ENCODE measurements at regions of chr4 and their contacts with region 1.

Region 1: GRCh38 chr4:177190995-177191568 is 118.6 kb upstream of the NEIL3 start:
- DNase-seq: no peak
- ATAC-seq: no peak
- H3K4me3 ChIP-seq: no peak overlapping the region
- H3K27ac ChIP-seq: no peak overlapping the region
- H3K4me1 ChIP-seq: no peaks in the 10 kb centered on the region
- H3K27me3 ChIP-seq: no peaks in the 10 kb centered on the region
- CTCF ChIP-seq: no peak

Region 2: GRCh38 chr4:176708771-176709311 is 482.2 kb before region 1 on chr4:
- CTCF ChIA-PET with region 1: no interaction called
- POLR2A ChIA-PET with region 1: interaction called, 13 read pairs
- in situ Hi-C with region 1: no loop called
- intact Hi-C with region 1: no loop called
- DNase-seq: no peak
- ATAC-seq: no peak
- H3K4me3 ChIP-seq: no peak overlapping the region
- H3K27ac ChIP-seq: no peak overlapping the region
- H3K4me1 ChIP-seq: no peaks in the 10 kb centered on the region
- H3K27me3 ChIP-seq: no peaks in the 10 kb centered on the region
- CTCF ChIP-seq: no peak

Region 3: DNA sequence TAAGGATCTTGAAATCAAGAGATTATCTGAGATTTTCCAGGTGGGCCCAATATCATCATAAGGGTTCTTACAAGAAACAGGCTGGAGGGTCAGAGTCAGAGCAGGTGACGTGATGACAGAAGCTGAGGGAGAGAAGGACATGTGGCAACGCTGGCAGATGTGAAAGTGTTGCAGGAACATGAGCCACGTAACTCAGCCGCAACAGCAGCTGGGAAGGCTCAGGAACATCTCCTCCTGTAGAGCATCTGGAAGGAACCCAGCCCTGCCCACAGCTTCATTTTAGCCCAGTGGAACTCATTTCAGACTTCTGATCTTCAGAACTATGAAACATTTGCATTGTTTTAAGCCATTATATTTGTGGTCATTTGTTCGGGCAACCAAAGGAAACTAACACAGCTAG is 242.1 kb before region 1 on chr4:
- CTCF ChIA-PET with region 1: no interaction called
- POLR2A ChIA-PET with region 1: no interaction called
- in situ Hi-C with region 1: no loop called
- intact Hi-C with region 1: no loop called
- DNase-seq: no peak
- ATAC-seq: no peak
- H3K4me3 ChIP-seq: no peak overlapping the region
- H3K27ac ChIP-seq: no peak overlapping the region
- H3K4me1 ChIP-seq: no peaks in the 10 kb centered on the region
- H3K27me3 ChIP-seq: no peaks in the 10 kb centered on the region
- CTCF ChIP-seq: no peak

Region 4: GRCh38 chr4:177131736-177132135 is 59.3 kb before region 1 on chr4:
- CTCF ChIA-PET with region 1: no interaction called
- POLR2A ChIA-PET with region 1: no interaction called
- in situ Hi-C with region 1: no loop called
- intact Hi-C with region 1: no loop called
- DNase-seq: no peak
- ATAC-seq: no peak
- H3K4me3 ChIP-seq: no peak overlapping the region
- H3K27ac ChIP-seq: no peak overlapping the region
- H3K4me1 ChIP-seq: no peaks in the 10 kb centered on the region
- H3K27me3 ChIP-seq: no peaks in the 10 kb centered on the region
- CTCF ChIP-seq: no peak